Activated CD8-positive, alpha-beta memory T cell treated with anti-CD3 and anti-CD28 coated beads, Interleukin-2, amount 10 ng/mL, durations not matched to agents 7 days and 5 days (primary cell): ENCODE measurements at regions of chr2 and their contacts with region 1.

Region 1: DNA sequence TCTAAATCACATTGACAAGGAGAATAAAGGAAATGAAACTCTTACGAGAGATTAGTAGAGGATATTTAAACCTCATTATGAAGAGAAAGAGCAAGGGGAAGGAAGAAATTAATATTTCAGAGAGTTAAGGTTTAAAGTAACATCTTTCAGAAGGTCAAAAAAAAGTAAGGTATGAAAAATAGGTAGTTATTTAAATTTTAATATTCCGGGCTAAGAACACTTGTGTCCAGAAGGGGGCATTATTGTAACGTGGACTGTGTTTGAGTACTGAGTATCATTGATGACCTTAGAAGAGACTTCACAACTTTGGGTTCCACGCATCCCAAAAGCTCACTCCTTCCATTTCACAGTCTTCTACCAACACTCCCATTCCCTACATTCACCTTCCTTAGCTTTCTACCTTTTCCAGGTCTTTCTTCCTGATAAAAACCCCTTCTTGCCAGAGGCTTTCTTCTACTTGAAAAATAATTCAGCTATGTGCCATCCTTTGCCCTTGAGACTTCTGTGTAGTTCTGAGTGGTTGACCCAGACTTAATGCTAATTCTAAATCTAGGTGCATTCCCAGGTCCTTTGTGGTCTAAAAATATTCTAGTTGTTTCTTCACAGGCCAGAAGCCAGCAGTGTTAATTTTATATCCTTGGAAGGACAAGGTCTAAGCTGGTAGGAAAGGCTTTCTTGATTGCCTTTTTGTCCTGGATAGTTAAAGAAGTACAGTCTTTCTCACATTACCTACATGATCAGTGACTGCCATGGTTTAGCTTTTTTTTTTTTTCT is 16.5 kb downstream of the DYNC1I2 start:
- DNase-seq: no peak
- ATAC-seq: no peak
- H3K4me3 Mint-ChIP-seq: no peak overlapping the region
- H3K27ac Mint-ChIP-seq: no peak overlapping the region
- H3K4me1 Mint-ChIP-seq: peaks cover 2% of the 10 kb centered on the region
- H3K27me3 Mint-ChIP-seq: no peaks in the 10 kb centered on the region

Region 2: DNA sequence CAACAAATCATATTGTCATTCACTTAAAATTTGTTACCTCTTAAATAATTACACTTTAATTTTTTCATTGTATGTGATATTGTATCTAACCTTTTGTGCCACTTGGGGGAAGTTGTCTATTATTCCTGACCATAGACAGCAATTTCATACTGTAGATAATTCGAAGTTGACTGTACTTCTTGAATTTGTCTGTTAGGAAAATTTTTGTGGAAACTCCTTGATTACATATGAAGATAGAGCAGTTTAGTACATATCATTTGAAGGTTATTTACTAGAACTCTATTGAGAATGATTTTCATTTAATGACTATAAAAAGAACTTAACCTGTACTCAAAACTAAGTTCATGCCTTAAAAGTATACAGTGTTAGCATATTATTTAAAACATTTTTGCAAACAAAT is 11.4 kb before region 1 on chr2:
- CTCF ChIA-PET with region 1: interaction called, 10 read pairs
- DNase-seq: no peak
- ATAC-seq: no peak
- H3K4me3 Mint-ChIP-seq: no peak overlapping the region
- H3K27ac Mint-ChIP-seq: no peak overlapping the region
- H3K4me1 Mint-ChIP-seq: peaks cover 17% of the 10 kb centered on the region
- H3K27me3 Mint-ChIP-seq: no peaks in the 10 kb centered on the region

Region 3: DNA sequence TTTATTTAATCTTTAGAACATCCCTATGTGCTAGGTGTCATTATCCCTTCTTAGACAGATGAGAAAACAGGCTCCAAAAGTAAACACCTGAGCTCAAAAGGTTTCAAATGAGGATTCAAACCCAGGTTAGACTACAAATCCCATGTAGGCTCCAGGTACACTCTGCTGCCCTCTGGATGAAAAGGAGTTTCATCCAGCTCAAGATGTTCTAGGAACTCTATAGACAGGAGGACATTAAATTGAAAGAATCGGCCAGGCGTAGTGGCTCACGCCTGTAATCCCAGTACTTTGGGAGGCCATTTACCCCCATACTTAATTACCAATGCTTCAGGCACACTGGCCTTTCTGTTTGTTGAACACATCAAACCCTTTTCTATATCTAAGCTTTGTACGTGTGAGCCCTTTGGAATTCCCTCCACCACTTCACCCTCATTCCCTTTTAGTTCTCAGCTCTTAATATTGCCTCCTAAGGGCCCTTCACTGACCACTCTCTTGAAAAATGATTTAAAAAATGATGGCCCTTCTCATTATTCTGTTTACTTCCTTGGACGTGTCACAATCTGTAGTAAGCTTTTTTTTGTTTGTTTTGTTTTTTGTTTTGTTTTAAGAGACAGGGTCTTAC is 179.6 kb after region 1 on chr2:
- CTCF ChIA-PET with region 1: no interaction called
- DNase-seq: no peak
- ATAC-seq: no peak
- H3K4me3 Mint-ChIP-seq: no peak overlapping the region
- H3K27ac Mint-ChIP-seq: no peak overlapping the region
- H3K4me1 Mint-ChIP-seq: peaks cover 28% of the 10 kb centered on the region
- H3K27me3 Mint-ChIP-seq: no peaks in the 10 kb centered on the region